BJ (cell line): ENCODE measurements at regions of chr12 and their contacts with region 1.

Region 1: GRCh38 chr12:124411281-124411878 is 116.5 kb downstream of the RFLNA start:
- DNase-seq: peak; percentile 80
- H3K4me3 ChIP-seq: no peak overlapping the region
- H3K27me3 ChIP-seq: no peaks in the 10 kb centered on the region
- CTCF ChIP-seq: no peak

Region 2: GRCh38 chr12:124399622-124400021 is 11.8 kb before region 1 on chr12:
- CTCF ChIA-PET with region 1: interaction called, 27 read pairs
- POLR2A ChIA-PET with region 1: no interaction called
- DNase-seq: no peak
- H3K4me3 ChIP-seq: no peak overlapping the region
- H3K27me3 ChIP-seq: no peaks in the 10 kb centered on the region
- CTCF ChIP-seq: peak; percentile 75